ENCODE measurements at regions of chr17 and their contacts with region 1.

Region 1: GRCh38 chr17:7887482-7888183 is 956 bp upstream of the CHD3 start:
- DNase-seq: peak; percentile 65 to 80
- ATAC-seq: peak; percentile 61 to 72
- H3K4me3 ChIP-seq: peak overlapping the region; percentile 64 to 74 (median 68)
- H3K27ac ChIP-seq: peak overlapping the region; percentile 77 to 89 (median 81)
- H3K4me1 ChIP-seq: peaks cover 41 to 47% of the 10 kb centered on the region in 2 donors
- H3K27me3 ChIP-seq: peaks cover 24 to 27% (median 25%) of the 10 kb centered on the region in 3 donors
- CTCF ChIP-seq: peak in 1 of 5 experiments; percentile 5
- POLR2A ChIP-seq: peak in 1 of 2 donors; percentile 55

Region 2: DNA sequence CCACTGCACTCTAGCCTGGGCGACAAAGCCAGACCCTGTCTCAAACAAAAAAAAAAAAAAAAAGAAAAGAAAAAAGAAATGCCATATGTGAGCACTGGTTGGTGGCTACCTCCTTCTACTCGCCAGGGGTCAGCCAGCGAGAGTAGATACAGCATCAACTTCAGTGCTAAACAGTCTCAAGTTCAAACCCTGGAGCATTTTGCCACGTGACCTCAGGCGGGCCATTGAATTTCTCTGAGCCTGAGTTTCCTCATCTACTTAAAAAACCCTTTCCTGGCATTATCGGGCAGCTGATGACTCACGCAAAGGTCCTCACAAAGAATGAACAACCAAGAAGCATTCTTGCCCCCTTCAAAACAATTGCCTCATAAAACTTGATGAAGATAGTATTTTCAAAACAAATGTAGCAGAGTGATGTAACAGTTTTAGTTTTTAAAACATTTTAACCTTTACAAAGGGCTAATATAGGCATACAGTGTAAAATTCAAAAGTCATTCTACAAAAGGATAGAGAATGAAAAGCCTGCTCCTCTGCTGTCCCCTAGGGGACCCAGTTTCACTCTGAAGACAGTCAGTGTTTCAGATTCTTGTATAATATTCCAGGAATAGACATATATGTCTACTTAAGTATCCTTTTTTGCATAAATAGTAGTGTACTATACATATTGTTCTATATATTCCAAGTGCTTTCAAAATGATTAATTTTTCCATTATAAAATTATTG is 141.7 kb before region 1 on chr17:
- in situ Hi-C with region 1: loop called in 1 of 4 experiments (anchors 25 kb)
- intact Hi-C with region 1: loop called (anchors 10 kb)
- DNase-seq: no peak
- ATAC-seq: peak in 1 of 2 donors; percentile 36
- H3K4me3 ChIP-seq: no peak overlapping the region
- H3K27ac ChIP-seq: no peak overlapping the region
- H3K4me1 ChIP-seq: no peaks in the 10 kb centered on the region
- H3K27me3 ChIP-seq: peaks cover 0 to 7% (median 0%) of the 10 kb centered on the region in 3 donors
- CTCF ChIP-seq: no peak
- POLR2A ChIP-seq: no peak

Region 3: GRCh38 chr17:7834962-7835813 is 52.4 kb before region 1 on chr17:
- in situ Hi-C with region 1: no loop called
- intact Hi-C with region 1: loop called (anchors 2 kb)
- DNase-seq: peak; percentile 97 to 98
- ATAC-seq: peak; percentile 65 to 74
- H3K4me3 ChIP-seq: peak overlapping the region; percentile 81 to 90 (median 85)
- H3K27ac ChIP-seq: peak overlapping the region; percentile 97 to 100 (median 100)
- H3K4me1 ChIP-seq: peaks cover 39 to 44% of the 10 kb centered on the region in 2 donors
- H3K27me3 ChIP-seq: no peaks in the 10 kb centered on the region
- CTCF ChIP-seq: peak; percentile 87 to 96 (median 88)
- POLR2A ChIP-seq: peak; percentile 84 to 94

Region 4: DNA sequence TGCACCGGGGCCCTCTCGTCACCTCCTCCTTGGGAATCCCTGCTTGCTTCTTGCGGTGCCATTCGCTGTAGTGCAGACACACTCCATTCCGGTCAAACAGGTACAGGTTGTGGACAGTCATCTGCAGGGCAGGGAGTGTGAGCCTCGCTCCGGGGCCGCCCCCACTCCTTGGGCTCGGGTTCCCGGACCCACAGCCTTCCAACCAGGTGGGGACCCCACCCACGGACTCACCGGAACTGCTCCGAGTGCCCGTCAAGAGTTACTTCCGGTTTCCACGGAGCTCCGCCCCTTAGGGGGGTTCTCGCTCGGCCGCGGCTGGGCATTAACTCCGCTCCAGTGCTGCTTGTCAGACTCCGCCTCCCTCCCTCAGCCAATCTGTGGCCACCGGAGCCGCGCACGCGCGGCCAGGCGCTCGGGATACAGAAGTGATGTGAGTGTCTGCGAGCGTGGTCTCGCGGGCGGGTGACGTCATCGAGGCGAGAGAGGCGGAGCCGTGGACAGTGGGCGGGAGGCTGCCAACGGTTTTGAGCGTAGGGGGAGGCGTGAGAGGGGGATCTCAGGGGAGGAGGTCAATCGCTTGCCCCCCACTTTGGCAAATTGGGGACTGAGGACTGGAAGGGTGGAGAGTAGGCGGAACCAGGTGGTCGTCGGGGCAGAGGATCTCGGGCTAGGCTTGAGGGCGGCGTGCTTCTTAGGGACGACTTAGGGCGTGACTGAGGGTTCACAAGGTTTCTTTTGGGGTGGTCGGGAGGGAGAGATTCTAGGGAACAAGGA is 44.3 kb after region 1 on chr17 and contains the starts of genes CNTROB and TRAPPC1:
- in situ Hi-C with region 1: no loop called
- intact Hi-C with region 1: loop called (anchors 2 kb)
- DNase-seq: peak; percentile 99 to 100
- ATAC-seq: peak; percentile 97 to 98
- H3K4me3 ChIP-seq: peak within 1 kb of the TSS; percentile 85 to 97 (median 94)
- H3K27ac ChIP-seq: peak within 1 kb of the TSS; percentile 83 to 90 (median 87)
- H3K4me1 ChIP-seq: peaks cover 17 to 19% of the 10 kb centered on the region in 2 donors
- H3K27me3 ChIP-seq: no peaks in the 10 kb centered on the region
- CTCF ChIP-seq: no peak
- POLR2A ChIP-seq: peak; percentile 78
- total RNA-seq, gene CNTROB: 3.6 to 14.3 (median 7.2) TPM
- total RNA-seq, gene TRAPPC1: 19.4 to 41.7 (median 30.0) TPM

Region 5: GRCh38 chr17:8740486-8740885 is 852.9 kb after region 1 on chr17:
- in situ Hi-C with region 1: no loop called
- intact Hi-C with region 1: no loop called
- DNase-seq: no peak
- ATAC-seq: no peak
- H3K4me3 ChIP-seq: no peak overlapping the region
- H3K27ac ChIP-seq: no peak overlapping the region
- H3K4me1 ChIP-seq: peaks cover 0 to 1% of the 10 kb centered on the region in 2 donors
- H3K27me3 ChIP-seq: peaks cover 0 to 5% (median 2%) of the 10 kb centered on the region in 3 donors
- CTCF ChIP-seq: no peak
- POLR2A ChIP-seq: no peak

Measured in gastrocnemius medialis (tissue), 4 donors.